CD8-positive, alpha-beta T cell (primary cell): ENCODE measurements at regions of chr16 and their contacts with region 1.

Region 1: DNA sequence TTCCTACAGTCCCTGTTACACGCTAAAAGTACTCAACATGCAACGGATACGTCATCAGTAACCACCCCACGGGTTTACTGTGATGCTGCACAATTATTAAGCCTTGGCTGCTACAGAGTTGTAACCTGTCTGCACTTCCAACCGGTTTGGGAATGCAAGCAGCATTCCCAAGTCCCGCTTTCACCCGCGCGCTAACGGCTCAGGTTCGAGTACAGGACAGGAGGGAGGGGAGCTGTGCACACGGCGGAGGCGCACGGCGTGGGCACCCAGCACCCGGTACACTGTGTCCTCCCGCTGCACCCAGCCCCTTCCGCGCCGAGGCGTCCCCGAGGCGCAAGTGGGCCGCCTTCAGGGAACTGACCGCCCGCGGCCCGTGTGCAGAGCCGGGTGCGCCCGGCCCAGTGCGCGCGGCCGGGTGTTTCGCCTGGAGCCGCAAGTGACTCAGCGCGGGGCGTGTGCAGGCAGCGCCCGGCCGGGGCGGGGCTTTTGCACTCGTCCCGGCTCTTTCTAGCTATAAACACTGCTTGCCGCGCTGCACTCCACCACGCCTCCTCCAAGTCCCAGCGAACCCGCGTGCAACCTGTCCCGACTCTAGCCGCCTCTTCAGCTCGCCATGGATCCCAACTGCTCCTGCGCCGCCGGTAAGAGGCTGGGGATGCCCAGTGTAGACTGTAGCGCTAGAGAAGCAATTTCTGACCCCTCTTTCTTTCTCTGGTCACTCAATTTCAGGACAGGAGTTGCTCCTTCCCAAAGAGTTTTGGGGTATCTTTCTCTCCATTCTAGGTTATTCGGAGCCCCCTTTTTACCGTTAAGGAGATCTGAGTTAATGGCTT is at the start of gene MT2A:
- DNase-seq: peak; percentile 68 to 94 (median 88)
- ATAC-seq: peak; percentile 75
- H3K4me3 ChIP-seq: peak within 1 kb of the TSS; percentile 91 to 95
- H3K4me3 Mint-ChIP-seq: peak within 1 kb of the TSS; percentile 98
- H3K27ac ChIP-seq: peak within 1 kb of the TSS; percentile 68 to 98
- H3K27ac Mint-ChIP-seq: peak within 1 kb of the TSS; percentile 94
- H3K4me1 ChIP-seq: peaks cover 37% of the 10 kb centered on the region
- H3K4me1 Mint-ChIP-seq: peaks cover 47% of the 10 kb centered on the region
- H3K27me3 ChIP-seq: no peaks in the 10 kb centered on the region
- H3K27me3 Mint-ChIP-seq: no peaks in the 10 kb centered on the region
- CTCF ChIP-seq: no peak
- total RNA-seq, gene MT2A: 71.0 to 95.7 TPM

Region 2: GRCh38 chr16:56281256-56281805 is 326.9 kb before region 1 on chr16:
- CTCF ChIA-PET with region 1: no interaction called
- POLR2A ChIA-PET with region 1: no interaction called
- intact Hi-C with region 1: no loop called
- DNase-seq: peak in 2 of 9 experiments; percentile 36 to 47
- ATAC-seq: no peak
- H3K4me3 ChIP-seq: no peak overlapping the region
- H3K4me3 Mint-ChIP-seq: no peak overlapping the region
- H3K27ac ChIP-seq: no peak overlapping the region
- H3K27ac Mint-ChIP-seq: no peak overlapping the region
- H3K4me1 ChIP-seq: peaks cover 5% of the 10 kb centered on the region
- H3K4me1 Mint-ChIP-seq: peaks cover 21% of the 10 kb centered on the region
- H3K27me3 ChIP-seq: no peaks in the 10 kb centered on the region
- H3K27me3 Mint-ChIP-seq: no peaks in the 10 kb centered on the region
- CTCF ChIP-seq: no peak

Region 3: GRCh38 chr16:56519459-56520250 is 88.6 kb before region 1 on chr16 and contains the start of gene BBS2:
- CTCF ChIA-PET with region 1: interaction called, 3 read pairs
- POLR2A ChIA-PET with region 1: no interaction called
- intact Hi-C with region 1: loop called in 1 of 2 experiments (anchors 10 kb)
- DNase-seq: peak; percentile 84 to 96 (median 92)
- ATAC-seq: peak; percentile 83
- H3K4me3 ChIP-seq: peak within 1 kb of the TSS; percentile 94 to 99
- H3K4me3 Mint-ChIP-seq: peak within 1 kb of the TSS; percentile 86
- H3K27ac ChIP-seq: peak within 1 kb of the TSS; percentile 82 to 92
- H3K27ac Mint-ChIP-seq: peak within 1 kb of the TSS; percentile 92
- H3K4me1 ChIP-seq: peaks cover 32% of the 10 kb centered on the region
- H3K4me1 Mint-ChIP-seq: peaks cover 50% of the 10 kb centered on the region
- H3K27me3 ChIP-seq: no peaks in the 10 kb centered on the region
- H3K27me3 Mint-ChIP-seq: no peaks in the 10 kb centered on the region
- CTCF ChIP-seq: no peak
- total RNA-seq, gene BBS2: 60.6 to 62.1 TPM

Region 4: DNA sequence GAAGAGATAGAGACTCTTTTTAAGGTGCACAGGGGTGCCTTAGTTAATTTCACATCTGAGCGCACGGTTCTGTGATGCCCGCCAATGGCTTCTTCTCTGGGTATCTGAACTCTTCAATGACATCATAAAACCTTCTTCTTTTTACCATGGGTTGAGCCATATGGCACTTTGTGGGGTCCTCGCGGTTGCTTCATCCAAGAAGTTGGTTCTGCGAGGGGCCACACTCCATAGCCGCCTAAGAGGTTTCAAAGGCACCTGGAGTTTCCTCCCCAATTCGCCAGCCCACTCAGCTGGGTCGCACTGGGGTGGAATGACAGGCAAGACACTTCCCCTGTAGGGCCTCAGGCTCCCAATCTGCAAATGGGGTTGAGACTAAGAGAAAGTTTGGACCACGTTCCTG is 53.8 kb before region 1 on chr16:
- CTCF ChIA-PET with region 1: no interaction called
- POLR2A ChIA-PET with region 1: no interaction called
- intact Hi-C with region 1: no loop called
- DNase-seq: no peak
- ATAC-seq: no peak
- H3K4me3 ChIP-seq: no peak overlapping the region
- H3K4me3 Mint-ChIP-seq: no peak overlapping the region
- H3K27ac ChIP-seq: no peak overlapping the region
- H3K27ac Mint-ChIP-seq: no peak overlapping the region
- H3K4me1 ChIP-seq: no peaks in the 10 kb centered on the region
- H3K4me1 Mint-ChIP-seq: no peaks in the 10 kb centered on the region
- H3K27me3 ChIP-seq: no peaks in the 10 kb centered on the region
- H3K27me3 Mint-ChIP-seq: peaks cover 12% of the 10 kb centered on the region
- CTCF ChIP-seq: no peak

Region 5: DNA sequence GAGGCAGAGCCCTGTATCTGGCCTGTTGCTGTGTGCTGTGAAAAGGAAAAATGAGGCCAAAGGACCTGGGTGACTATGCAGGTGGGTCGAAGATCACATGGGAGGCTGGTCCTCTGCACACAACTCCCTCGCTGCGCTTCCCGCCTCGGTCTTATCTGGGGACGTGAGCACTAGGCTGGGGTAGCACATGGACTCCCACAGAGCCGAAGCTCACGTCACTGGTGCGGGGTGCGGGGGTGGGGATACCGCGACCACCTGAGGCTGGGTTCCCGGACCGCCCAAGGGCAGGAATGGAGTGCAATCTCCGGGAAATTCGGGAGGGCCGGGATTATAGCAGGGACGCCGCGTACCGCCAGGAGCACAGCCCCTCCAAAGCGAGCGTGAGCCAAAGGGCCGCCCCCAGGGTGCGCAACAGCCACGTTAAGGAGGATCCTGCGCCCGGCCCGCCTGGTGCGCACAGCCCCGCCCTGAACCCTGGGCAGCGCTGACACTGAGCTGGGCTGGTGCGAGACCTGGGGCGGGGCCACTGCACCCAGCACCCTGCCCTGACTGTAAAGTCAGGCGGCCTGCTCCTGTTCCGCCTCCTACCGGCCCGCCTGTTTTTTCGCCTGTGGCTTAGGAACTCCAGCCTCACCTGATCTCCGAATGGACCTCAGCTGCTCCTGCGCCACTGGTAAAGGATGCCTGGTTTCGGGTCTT is 35.0 kb after region 1 on chr16:
- CTCF ChIA-PET with region 1: interaction called, 5 read pairs
- POLR2A ChIA-PET with region 1: interaction called, 21 read pairs
- intact Hi-C with region 1: loop called (anchors 1 to 5 kb)
- DNase-seq: peak; percentile 52 to 92 (median 77)
- ATAC-seq: peak; percentile 99
- H3K4me3 ChIP-seq: peak overlapping the region; percentile 33 to 47
- H3K4me3 Mint-ChIP-seq: peak overlapping the region; percentile 71
- H3K27ac ChIP-seq: peak overlapping the region in 1 of 2 experiments; percentile 3
- H3K27ac Mint-ChIP-seq: no peak overlapping the region
- H3K4me1 ChIP-seq: peaks cover 11% of the 10 kb centered on the region
- H3K4me1 Mint-ChIP-seq: peaks cover 23% of the 10 kb centered on the region
- H3K27me3 ChIP-seq: peaks cover 3 to 5% of the 10 kb centered on the region in 2 experiments
- H3K27me3 Mint-ChIP-seq: peaks cover 23% of the 10 kb centered on the region
- CTCF ChIP-seq: peak; percentile 19

Region 6: GRCh38 chr16:56681939-56682702 is 73.9 kb after region 1 on chr16 and contains the start of gene MT1X:
- CTCF ChIA-PET with region 1: no interaction called
- POLR2A ChIA-PET with region 1: no interaction called
- intact Hi-C with region 1: loop called (anchors 1 kb)
- DNase-seq: peak; percentile 63 to 94 (median 88)
- ATAC-seq: peak; percentile 99
- H3K4me3 ChIP-seq: peak within 1 kb of the TSS; percentile 58 to 82
- H3K4me3 Mint-ChIP-seq: peak within 1 kb of the TSS; percentile 96
- H3K27ac ChIP-seq: peak within 1 kb of the TSS; percentile 60 to 80
- H3K27ac Mint-ChIP-seq: peak within 1 kb of the TSS; percentile 97
- H3K4me1 ChIP-seq: peaks cover 18% of the 10 kb centered on the region
- H3K4me1 Mint-ChIP-seq: peaks cover 25% of the 10 kb centered on the region
- H3K27me3 ChIP-seq: no peaks in the 10 kb centered on the region
- H3K27me3 Mint-ChIP-seq: no peaks in the 10 kb centered on the region
- CTCF ChIP-seq: no peak
- total RNA-seq, gene MT1X: 18.6 to 26.2 TPM